ENCODE measurements at regions of chr17 and their contacts with region 1.

Region 1: DNA sequence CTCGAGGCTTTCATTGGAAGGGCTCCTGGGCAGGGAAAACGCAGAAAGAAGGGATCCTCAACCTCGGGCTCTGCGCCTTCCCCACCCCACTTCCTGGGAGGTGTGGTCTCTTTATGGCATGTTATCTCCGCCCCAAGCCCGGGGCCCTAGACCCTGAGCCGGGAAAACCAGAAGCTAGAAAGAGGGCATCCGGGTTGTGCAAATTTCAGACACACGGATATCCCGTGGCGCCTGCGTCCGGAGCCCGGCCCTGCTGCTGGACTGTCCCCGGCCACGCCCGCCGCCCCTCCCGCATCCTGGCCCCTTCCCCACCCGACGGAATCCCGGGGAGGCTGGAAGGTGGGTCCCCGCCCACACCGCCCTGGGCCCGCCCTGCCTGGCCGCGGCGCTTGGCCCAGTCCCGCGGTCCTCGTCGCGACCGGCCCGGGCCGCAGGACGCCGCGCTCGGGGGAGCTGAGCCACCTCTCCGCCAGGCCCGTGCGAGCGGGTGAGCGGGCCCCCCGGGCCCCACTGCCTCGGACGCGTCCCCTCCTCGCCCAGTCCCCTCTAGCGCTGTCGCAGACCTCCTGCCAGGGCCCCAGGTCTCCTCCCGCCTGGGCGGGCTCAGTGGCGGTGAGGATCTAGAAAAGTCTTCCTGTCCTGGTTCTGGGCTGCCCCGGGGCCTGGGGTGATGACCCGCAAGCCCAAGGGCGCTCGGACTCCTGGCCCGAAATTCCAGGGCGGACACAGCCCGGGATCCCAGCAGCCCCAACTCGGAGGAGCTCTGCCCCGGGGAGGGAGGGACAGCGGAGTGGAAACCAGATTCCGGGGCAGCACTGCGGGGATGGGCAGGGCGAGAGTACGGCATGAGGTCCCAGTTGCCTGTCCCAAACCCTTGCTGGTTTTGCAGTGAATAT is at the start of gene SLC16A5:
- DNase-seq: peak; percentile 49
- H3K4me3 Mint-ChIP-seq: peak within 1 kb of the TSS; percentile 80
- H3K27ac Mint-ChIP-seq: peak within 1 kb of the TSS; percentile 59
- H3K4me1 Mint-ChIP-seq: peaks cover 33% of the 10 kb centered on the region
- H3K27me3 Mint-ChIP-seq: no peaks in the 10 kb centered on the region
- total RNA-seq, gene SLC16A5: 5.5 and 7.2 TPM in 2 replicates

Region 2: GRCh38 chr17:74981979-74982662 is 105.7 kb before region 1 on chr17:
- intact Hi-C with region 1: loop called (anchors 5 kb)
- DNase-seq: peak; percentile 79
- H3K4me3 Mint-ChIP-seq: peak overlapping the region; percentile 89
- H3K27ac Mint-ChIP-seq: peak overlapping the region; percentile 74
- H3K4me1 Mint-ChIP-seq: peaks cover 17% of the 10 kb centered on the region
- H3K27me3 Mint-ChIP-seq: peaks cover 61% of the 10 kb centered on the region

Region 3: GRCh38 chr17:75102385-75102821 is 14.6 kb after region 1 on chr17:
- intact Hi-C with region 1: no loop called
- DNase-seq: no peak
- H3K4me3 Mint-ChIP-seq: no peak overlapping the region
- H3K27ac Mint-ChIP-seq: no peak overlapping the region
- H3K4me1 Mint-ChIP-seq: no peaks in the 10 kb centered on the region
- H3K27me3 Mint-ChIP-seq: peaks cover 2% of the 10 kb centered on the region

Region 4: DNA sequence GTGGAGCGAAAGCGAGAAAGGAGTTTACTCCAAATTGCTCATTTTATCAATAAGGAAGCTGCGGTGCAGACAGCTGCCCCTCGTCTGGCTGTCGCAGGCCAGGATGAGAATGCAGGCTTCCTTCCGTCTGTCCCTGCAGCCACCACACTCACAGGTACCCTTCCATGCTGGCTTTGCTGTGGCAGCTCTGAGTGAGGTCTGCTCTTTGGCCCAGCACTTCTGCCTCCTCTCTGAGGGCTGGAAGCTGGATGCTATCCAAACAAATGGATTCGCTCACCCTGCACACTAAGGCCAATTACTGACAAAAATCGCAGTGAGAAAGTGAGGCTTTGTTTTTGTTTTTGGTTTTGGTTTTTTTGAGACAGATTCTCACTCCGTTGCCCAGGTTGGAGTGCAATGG is 28.9 kb after region 1 on chr17:
- intact Hi-C with region 1: no loop called
- DNase-seq: no peak
- H3K4me3 Mint-ChIP-seq: no peak overlapping the region
- H3K27ac Mint-ChIP-seq: no peak overlapping the region
- H3K4me1 Mint-ChIP-seq: peaks cover 34% of the 10 kb centered on the region
- H3K27me3 Mint-ChIP-seq: no peaks in the 10 kb centered on the region